Aorta (tissue), 5 donors: ENCODE measurements at regions of chr1 and their contacts with region 1.

Region 1: GRCh38 chr1:114757455-114758250 is at the start of gene CSDE1:
- DNase-seq: peak; percentile 98 to 99
- ATAC-seq: peak; percentile 100
- H3K4me3 ChIP-seq: peak within 1 kb of the TSS; percentile 75 to 94
- H3K27ac ChIP-seq: peak within 1 kb of the TSS; percentile 87 to 95
- H3K4me1 ChIP-seq: peaks cover 0 to 2% of the 10 kb centered on the region in 2 donors
- H3K27me3 ChIP-seq: no peaks in the 10 kb centered on the region
- total RNA-seq, gene CSDE1: 549 to 607 TPM

Region 2: GRCh38 chr1:115089420-115090185 is 331.9 kb after region 1 on chr1 and contains the start of gene TSPAN2:
- intact Hi-C with region 1: loop called in 1 of 2 experiments (anchors 5 kb)
- DNase-seq: peak; percentile 92 to 95
- ATAC-seq: peak; percentile 92
- H3K4me3 ChIP-seq: peak within 1 kb of the TSS; percentile 66 to 84
- H3K27ac ChIP-seq: peak within 1 kb of the TSS; percentile 99 to 100
- H3K4me1 ChIP-seq: peaks cover 0 to 13% of the 10 kb centered on the region in 2 donors
- H3K27me3 ChIP-seq: no peaks in the 10 kb centered on the region
- total RNA-seq, gene TSPAN2: 49.5 to 83.0 TPM